ENCODE measurements at regions of chr2 and their contacts with region 1.

Region 1: GRCh38 chr2:238426568-238427434 is at the start of gene ASB1:
- DNase-seq: peak; percentile 83 to 91
- ATAC-seq: peak; percentile 89
- H3K4me3 ChIP-seq: peak within 1 kb of the TSS; percentile 59 to 68
- H3K27ac ChIP-seq: peak within 1 kb of the TSS; percentile 62 to 97
- H3K4me1 ChIP-seq: no peaks in the 10 kb centered on the region
- H3K27me3 ChIP-seq: no peaks in the 10 kb centered on the region
- total RNA-seq, gene ASB1: 31.3 to 42.8 TPM

Region 2: DNA sequence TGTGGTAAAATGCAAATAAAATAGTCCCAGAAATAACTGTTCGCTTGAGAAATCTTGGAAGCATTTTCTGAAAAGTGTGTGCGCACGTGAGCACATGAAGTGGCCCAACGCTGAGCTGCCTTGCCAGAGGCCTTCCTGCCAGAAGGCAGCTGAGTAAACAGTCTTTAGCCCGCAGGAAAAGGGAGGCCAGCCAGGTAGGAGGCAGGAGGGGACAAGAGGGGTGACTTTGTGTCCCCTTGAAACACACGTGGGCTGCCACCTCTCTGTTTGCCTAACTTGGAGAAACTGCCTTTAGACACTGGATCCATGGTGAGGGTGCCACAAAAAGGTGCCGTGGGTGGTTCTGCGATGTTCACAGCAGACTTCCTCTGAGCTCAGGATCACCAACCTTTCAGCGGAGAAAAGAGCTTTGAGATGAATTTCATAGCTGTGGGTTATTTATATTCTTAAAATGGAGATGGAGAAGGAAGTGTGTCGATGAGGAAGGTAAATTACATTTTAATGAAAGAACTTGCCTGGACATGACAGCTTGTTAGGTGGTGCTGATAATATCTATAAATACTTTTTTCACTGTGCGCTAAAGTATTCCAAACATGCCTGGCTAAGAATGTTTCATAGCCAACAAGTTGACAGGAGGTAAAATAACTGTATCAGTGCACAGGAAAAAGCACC is 36.7 kb before region 1 on chr2:
- intact Hi-C with region 1: loop called in 1 of 2 experiments (anchors 5 kb)
- DNase-seq: no peak
- ATAC-seq: no peak
- H3K4me3 ChIP-seq: no peak overlapping the region
- H3K27ac ChIP-seq: peak overlapping the region in 1 of 2 donors; percentile 87
- H3K4me1 ChIP-seq: no peaks in the 10 kb centered on the region
- H3K27me3 ChIP-seq: no peaks in the 10 kb centered on the region

Region 3: DNA sequence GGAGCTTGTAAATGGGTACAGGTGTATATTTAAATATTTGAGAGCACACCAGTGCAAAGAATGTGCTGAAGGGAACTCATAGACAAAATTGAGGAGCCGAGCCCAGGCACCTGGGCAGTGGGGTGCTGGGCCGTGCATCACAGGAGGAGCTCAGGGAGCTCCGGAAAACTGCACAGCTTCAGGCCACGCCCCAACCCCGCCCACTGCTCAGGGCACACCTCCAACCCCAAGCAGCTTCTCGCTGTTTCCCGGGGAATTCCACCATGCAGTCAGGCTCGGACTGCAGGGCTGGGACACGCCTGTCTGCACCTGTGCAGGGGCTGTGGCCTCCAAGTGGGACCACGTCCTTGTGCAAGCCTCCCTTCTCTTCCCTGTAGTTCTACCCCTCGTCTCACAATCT is 731.0 kb after region 1 on chr2:
- intact Hi-C with region 1: no loop called
- DNase-seq: peak; percentile 38 to 75
- ATAC-seq: no peak
- H3K4me3 ChIP-seq: no peak overlapping the region
- H3K27ac ChIP-seq: no peak overlapping the region
- H3K4me1 ChIP-seq: no peaks in the 10 kb centered on the region
- H3K27me3 ChIP-seq: no peaks in the 10 kb centered on the region

Region 4: DNA sequence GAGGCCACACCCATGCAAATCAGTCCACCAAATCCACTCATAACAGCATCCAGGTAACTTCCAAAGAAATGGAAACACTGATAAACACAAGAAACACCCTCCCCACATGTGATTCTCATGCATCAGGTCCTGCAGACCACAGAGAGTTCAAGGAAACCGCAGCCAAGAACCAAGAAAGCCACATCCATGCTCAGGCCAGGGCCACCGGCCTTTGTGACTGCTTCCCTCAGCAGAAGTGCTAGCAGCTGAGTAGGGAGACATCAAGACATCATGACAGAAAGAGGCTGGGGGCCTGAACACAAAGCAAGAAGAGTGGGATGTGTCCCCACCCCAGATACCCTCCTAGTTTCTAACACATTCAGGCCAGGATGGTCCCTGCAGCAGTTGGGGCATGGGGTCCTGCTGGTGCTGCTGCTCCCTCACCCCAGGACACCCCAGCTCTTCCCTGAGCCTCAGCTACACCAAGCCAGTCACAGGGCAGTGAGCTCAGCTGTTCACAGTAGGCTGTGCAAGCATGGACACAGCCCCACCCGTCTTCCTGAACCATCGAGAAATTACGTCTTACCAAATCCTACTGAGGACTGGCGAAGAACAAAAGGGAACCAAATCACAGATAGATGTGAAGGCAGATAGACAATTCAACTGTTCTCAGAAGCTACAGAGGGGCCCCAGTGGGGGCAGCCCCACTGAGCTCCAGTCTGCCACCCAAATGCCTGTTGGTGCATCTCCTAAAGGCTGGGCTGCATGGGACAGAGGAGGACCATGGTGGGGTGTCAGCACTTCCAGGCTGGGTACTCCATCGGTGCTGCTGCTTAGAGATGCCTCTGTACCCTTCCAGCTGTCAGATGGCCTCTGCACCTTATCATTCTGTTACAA is 913.2 kb after region 1 on chr2:
- intact Hi-C with region 1: no loop called
- DNase-seq: no peak
- ATAC-seq: no peak
- H3K4me3 ChIP-seq: no peak overlapping the region
- H3K27ac ChIP-seq: no peak overlapping the region
- H3K4me1 ChIP-seq: no peaks in the 10 kb centered on the region
- H3K27me3 ChIP-seq: no peaks in the 10 kb centered on the region